ENCODE measurements at regions of chr15 and their contacts with region 1.

Region 1: GRCh38 chr15:78339559-78339958 is 594 bp upstream of the CRABP1 start:
- DNase-seq: no peak
- H3K4me3 ChIP-seq: no peak overlapping the region
- H3K27ac ChIP-seq: no peak overlapping the region
- H3K4me1 ChIP-seq: no peaks in the 10 kb centered on the region
- H3K27me3 ChIP-seq: peaks cover 79% of the 10 kb centered on the region
- CTCF ChIP-seq: no peak

Region 2: GRCh38 chr15:78103748-78104479 is 235.6 kb before region 1 on chr15:
- CTCF ChIA-PET with region 1: no interaction called
- POLR2A ChIA-PET with region 1: no interaction called
- intact Hi-C with region 1: no loop called
- DNase-seq: peak; percentile 43 to 68
- H3K4me3 ChIP-seq: no peak overlapping the region
- H3K27ac ChIP-seq: 0 out of 2 replicates have a peak overlapping the region, but pooled peaks have one; percentile 12
- H3K4me1 ChIP-seq: peaks cover 46% of the 10 kb centered on the region
- H3K27me3 ChIP-seq: no peaks in the 10 kb centered on the region
- CTCF ChIP-seq: no peak

Region 3: DNA sequence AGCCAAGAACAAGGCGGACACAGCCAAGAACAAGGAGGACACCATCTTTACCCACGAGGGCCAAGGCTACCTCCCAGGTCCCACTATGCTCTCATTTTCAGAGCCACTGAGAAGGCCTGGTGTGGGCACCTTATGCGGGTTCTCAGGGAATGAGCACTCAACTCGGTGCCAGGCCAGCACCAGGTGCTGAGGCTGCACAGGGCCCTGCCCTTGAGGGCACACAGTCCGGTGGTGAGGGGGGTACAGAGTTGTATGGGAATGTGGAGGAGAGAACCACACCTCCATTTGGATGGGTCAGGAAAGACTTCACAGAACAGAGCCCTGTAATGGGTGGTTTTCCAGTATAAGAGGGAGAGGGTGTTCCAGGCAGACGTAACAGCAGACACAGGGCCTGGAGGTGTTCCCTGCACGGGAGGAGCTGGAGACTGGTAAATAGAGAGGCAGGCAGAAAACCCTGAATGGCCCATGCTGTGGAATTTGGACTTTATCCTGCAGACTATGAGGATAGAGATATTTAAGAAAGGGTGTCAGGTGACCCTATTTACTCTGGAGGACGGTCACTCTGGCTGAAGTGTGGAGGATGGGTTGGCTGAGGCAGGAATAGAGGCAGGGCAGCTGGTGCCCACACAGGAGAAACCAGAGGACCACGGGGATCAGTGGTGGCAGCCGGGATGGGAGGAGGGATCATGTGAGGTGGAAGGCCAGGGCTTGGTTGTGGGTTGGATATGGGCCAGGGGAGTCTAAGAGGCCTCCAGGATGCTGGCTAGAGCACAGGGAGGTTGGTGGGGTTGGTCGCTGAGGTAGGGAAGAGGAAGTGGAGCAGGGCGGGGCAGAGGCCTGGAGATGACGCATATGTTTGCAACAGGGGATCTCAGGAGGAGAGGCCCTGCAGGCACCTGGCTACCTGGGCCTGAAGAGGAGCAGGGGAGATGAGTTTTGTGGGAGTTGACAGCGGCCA is 35.2 kb after region 1 on chr15:
- CTCF ChIA-PET with region 1: no interaction called
- POLR2A ChIA-PET with region 1: interaction called, 11 read pairs
- intact Hi-C with region 1: no loop called
- DNase-seq: peak; percentile 73 to 83
- H3K4me3 ChIP-seq: no peak overlapping the region
- H3K27ac ChIP-seq: peak overlapping the region; percentile 29; the same call in 1 of the 2 replicates
- H3K4me1 ChIP-seq: peaks cover 18% of the 10 kb centered on the region
- H3K27me3 ChIP-seq: no peaks in the 10 kb centered on the region
- CTCF ChIP-seq: no peak

Region 4: GRCh38 chr15:79105141-79105540 is 765.6 kb after region 1 on chr15:
- CTCF ChIA-PET with region 1: no interaction called
- POLR2A ChIA-PET with region 1: no interaction called
- intact Hi-C with region 1: no loop called
- DNase-seq: no peak
- H3K4me3 ChIP-seq: no peak overlapping the region
- H3K27ac ChIP-seq: no peak overlapping the region
- H3K4me1 ChIP-seq: no peaks in the 10 kb centered on the region
- H3K27me3 ChIP-seq: peaks cover 16% of the 10 kb centered on the region; the same call in 1 of the 2 replicates
- CTCF ChIP-seq: no peak